Mammary epithelial cell (primary cell): ENCODE measurements at regions of chr13 and their contacts with region 1.

Region 1: DNA sequence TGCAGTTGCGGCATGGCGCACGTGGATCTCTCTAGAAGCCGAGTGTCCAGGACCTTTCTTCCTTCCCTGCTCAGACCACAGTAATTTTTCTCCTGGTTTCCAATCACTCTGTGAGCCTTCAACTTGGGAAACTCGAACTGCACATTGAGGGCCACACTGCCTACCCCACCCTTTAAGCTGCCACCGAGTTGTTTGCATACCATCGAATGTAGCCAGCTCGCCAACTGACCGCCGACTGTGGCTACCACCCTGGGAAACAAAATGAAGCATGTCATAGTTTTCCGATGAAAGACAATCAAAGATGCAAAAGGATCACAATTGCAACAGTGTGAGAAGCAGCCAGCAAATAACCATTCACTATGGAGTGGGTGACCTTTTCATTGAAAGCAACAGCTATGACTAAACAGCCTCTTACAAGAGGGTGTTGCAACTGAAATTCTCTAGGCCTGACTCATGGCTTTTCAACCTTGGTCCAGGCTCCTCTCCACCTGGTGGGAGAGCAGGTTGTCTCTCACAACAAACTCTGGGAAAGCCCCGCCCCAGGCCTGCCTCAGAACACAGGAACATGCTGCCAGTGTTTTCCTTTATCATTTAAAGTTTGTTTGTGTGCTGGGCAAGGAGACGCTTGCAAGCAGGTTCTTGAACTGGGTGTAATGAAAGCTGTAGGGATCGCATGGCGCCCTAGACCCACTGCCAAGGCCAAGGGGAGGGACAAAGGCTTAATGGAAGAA is 141.7 kb upstream of the SERP2 start:
- DNase-seq: peak; percentile 98
- H3K4me3 ChIP-seq: no peak overlapping the region
- H3K27ac ChIP-seq: peak overlapping the region; percentile 70
- H3K4me1 ChIP-seq: peaks cover 17% of the 10 kb centered on the region
- H3K27me3 ChIP-seq: no peaks in the 10 kb centered on the region
- CTCF ChIP-seq: peak in 1 of 2 donors; percentile 53

Region 2: GRCh38 chr13:44197791-44198770 is 33.9 kb before region 1 on chr13:
- CTCF ChIA-PET with region 1: no interaction called
- dilution Hi-C with region 1: no loop called
- in situ Hi-C with region 1: no loop called
- intact Hi-C with region 1: loop called (anchors 5 kb)
- DNase-seq: peak; percentile 49
- H3K4me3 ChIP-seq: no peak overlapping the region
- H3K27ac ChIP-seq: peak overlapping the region; percentile 7
- H3K4me1 ChIP-seq: peaks cover 25% of the 10 kb centered on the region
- H3K27me3 ChIP-seq: no peaks in the 10 kb centered on the region
- CTCF ChIP-seq: no peak

Region 3: GRCh38 chr13:44300895-44301638 is 69.1 kb after region 1 on chr13:
- CTCF ChIA-PET with region 1: no interaction called
- dilution Hi-C with region 1: no loop called
- in situ Hi-C with region 1: no loop called
- intact Hi-C with region 1: loop called (anchors 2 kb)
- DNase-seq: peak; percentile 92
- H3K4me3 ChIP-seq: no peak overlapping the region
- H3K27ac ChIP-seq: peak overlapping the region; percentile 84
- H3K4me1 ChIP-seq: peaks cover 38% of the 10 kb centered on the region
- H3K27me3 ChIP-seq: no peaks in the 10 kb centered on the region
- CTCF ChIP-seq: peak in 1 of 2 donors; percentile 5